GM12878 (cell line): ENCODE measurements at regions of chr17 and their contacts with region 1.

Region 1: DNA sequence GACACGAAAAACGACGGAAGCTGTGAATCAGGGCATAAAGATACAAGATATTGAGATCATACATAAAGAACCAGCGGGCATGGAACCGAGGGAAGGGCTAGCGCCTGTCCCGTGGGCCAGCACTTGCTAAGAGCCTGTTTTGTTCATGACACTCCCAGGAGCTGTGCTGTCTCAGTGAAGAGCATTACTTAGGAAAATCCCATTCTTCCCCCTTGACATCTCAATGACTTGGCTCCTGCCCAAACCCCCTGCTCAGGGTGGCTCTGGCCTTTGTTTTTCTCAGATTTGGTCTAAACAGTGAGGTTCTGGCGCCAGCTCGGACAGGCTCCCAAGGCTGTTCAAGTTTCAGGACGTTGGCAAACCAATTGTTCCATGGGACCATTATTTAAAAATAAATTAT is 79.1 kb upstream of the SEC14L1 start:
- DNase-seq: no peak
- ATAC-seq: no peak
- H3K4me3 ChIP-seq: no peak overlapping the region
- H3K27ac ChIP-seq: no peak overlapping the region
- H3K4me1 ChIP-seq: no peaks in the 10 kb centered on the region
- H3K27me3 ChIP-seq: no peaks in the 10 kb centered on the region; a peak in 1 of 4 replicates
- CTCF ChIP-seq: no peak
- EP300 ChIP-seq: no peak
- POLR2A ChIP-seq: no peak
- RAD21 ChIP-seq: no peak

Region 2: DNA sequence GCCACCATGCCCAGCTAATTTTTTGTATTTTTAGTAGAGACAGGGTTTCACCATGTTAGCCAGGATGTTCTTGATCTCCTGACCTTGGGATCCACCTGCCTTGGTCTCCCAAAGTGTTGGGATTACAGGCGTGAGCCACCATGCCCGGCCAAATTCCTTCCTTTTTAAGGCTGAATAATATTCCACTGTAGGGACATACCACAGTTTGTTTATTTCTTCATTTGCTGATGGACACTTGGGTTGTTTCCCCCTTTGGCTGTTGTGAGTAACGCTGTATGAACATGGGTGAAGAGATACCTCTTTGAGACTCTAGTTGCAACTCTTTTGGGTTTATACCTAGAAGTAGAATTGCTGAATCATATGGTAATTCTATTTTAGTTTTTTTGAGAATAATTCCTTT is 206.6 kb before region 1 on chr17:
- CTCF ChIA-PET with region 1: no interaction called
- POLR2A ChIA-PET with region 1: no interaction called
- RAD21 ChIA-PET with region 1: no interaction called
- SMC1A ChIA-PET with region 1: no interaction called
- in situ Hi-C with region 1: loop called (anchors 5 kb)
- intact Hi-C with region 1: no loop called
- DNase-seq: no peak
- ATAC-seq: no peak
- H3K4me3 ChIP-seq: no peak overlapping the region
- H3K27ac ChIP-seq: no peak overlapping the region
- H3K4me1 ChIP-seq: no peaks in the 10 kb centered on the region
- H3K27me3 ChIP-seq: peaks cover 1 to 2% of the 10 kb centered on the region in 2 experiments; a peak in 3 of 4 replicates
- CTCF ChIP-seq: no peak
- EP300 ChIP-seq: no peak
- POLR2A ChIP-seq: no peak
- RAD21 ChIP-seq: no peak

Region 3: DNA sequence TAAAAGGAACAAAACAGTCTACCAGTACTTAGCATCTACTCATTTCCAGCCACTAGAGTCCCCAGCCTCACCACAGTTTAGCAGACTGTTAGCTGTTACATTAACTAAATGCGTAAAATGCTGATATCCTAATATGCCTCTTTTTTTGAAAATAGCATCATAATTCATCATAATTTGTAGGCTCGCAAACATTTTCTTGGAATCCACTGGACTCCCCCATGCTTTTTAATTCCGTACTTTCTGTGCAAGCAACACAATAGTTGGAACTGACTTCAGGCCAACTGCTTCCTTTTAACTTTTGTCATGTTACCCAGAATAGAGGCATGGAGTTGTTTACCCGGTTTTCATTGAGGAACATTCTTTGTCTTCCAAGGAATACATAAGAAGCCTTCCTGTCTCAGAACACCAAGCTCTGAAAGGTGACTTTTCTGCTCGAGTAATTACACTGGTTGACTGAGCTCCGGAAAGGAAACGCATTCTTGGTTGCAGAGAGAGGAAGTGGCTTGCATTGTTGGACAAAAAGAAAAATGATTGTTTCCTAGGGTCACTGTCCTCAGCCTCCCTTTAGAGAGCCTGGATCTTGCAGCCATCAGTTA is 48.2 kb after region 1 on chr17:
- CTCF ChIA-PET with region 1: no interaction called
- POLR2A ChIA-PET with region 1: no interaction called
- RAD21 ChIA-PET with region 1: no interaction called
- SMC1A ChIA-PET with region 1: no interaction called
- in situ Hi-C with region 1: no loop called
- intact Hi-C with region 1: no loop called
- DNase-seq: peak; percentile 60
- ATAC-seq: peak; percentile 45
- H3K4me3 ChIP-seq: no peak overlapping the region
- H3K27ac ChIP-seq: peak overlapping the region; percentile 2
- H3K4me1 ChIP-seq: peaks cover 41% of the 10 kb centered on the region
- H3K27me3 ChIP-seq: no peaks in the 10 kb centered on the region
- CTCF ChIP-seq: peak in 1 of 3 experiments; percentile 5; a peak in 1 of 6 replicates
- EP300 ChIP-seq: no peak
- POLR2A ChIP-seq: no peak
- RAD21 ChIP-seq: no peak